ENCODE measurements at regions of chrX and their contacts with region 1.

Region 1: GRCh38 chrX:16826207-16826606 is 39.9 kb downstream of the TXLNG start:
- DNase-seq: peak in 4 of 14 experiments; percentile 8 to 43 (median 36)
- ATAC-seq: peak; percentile 44
- H3K4me3 ChIP-seq: no peak overlapping the region
- H3K4me3 Mint-ChIP-seq: no peak overlapping the region
- H3K27ac ChIP-seq: no peak overlapping the region
- H3K27ac Mint-ChIP-seq: no peak overlapping the region
- H3K4me1 ChIP-seq: no peaks in the 10 kb centered on the region
- H3K4me1 Mint-ChIP-seq: no peaks in the 10 kb centered on the region
- H3K27me3 ChIP-seq: no peaks in the 10 kb centered on the region
- H3K27me3 Mint-ChIP-seq: no peaks in the 10 kb centered on the region
- CTCF ChIP-seq: no peak

Region 2: GRCh38 chrX:16778545-16778944 is 47.7 kb before region 1 on chrX:
- CTCF ChIA-PET with region 1: no interaction called
- POLR2A ChIA-PET with region 1: no interaction called
- intact Hi-C with region 1: no loop called
- DNase-seq: no peak
- ATAC-seq: no peak
- H3K4me3 ChIP-seq: no peak overlapping the region
- H3K4me3 Mint-ChIP-seq: no peak overlapping the region
- H3K27ac ChIP-seq: no peak overlapping the region
- H3K27ac Mint-ChIP-seq: no peak overlapping the region
- H3K4me1 ChIP-seq: no peaks in the 10 kb centered on the region
- H3K4me1 Mint-ChIP-seq: no peaks in the 10 kb centered on the region
- H3K27me3 ChIP-seq: no peaks in the 10 kb centered on the region
- H3K27me3 Mint-ChIP-seq: no peaks in the 10 kb centered on the region
- CTCF ChIP-seq: no peak

Region 3: GRCh38 chrX:16845686-16846085 is 19.5 kb after region 1 on chrX:
- CTCF ChIA-PET with region 1: no interaction called
- POLR2A ChIA-PET with region 1: no interaction called
- intact Hi-C with region 1: loop called in 1 of 2 experiments (anchors 2 kb)
- DNase-seq: no peak
- ATAC-seq: no peak
- H3K4me3 ChIP-seq: no peak overlapping the region
- H3K4me3 Mint-ChIP-seq: no peak overlapping the region
- H3K27ac ChIP-seq: no peak overlapping the region
- H3K27ac Mint-ChIP-seq: no peak overlapping the region
- H3K4me1 ChIP-seq: no peaks in the 10 kb centered on the region
- H3K4me1 Mint-ChIP-seq: peaks cover 5% of the 10 kb centered on the region
- H3K27me3 ChIP-seq: no peaks in the 10 kb centered on the region
- H3K27me3 Mint-ChIP-seq: no peaks in the 10 kb centered on the region
- CTCF ChIP-seq: no peak

Region 4: GRCh38 chrX:16882702-16883486 is 56.7 kb after region 1 on chrX:
- CTCF ChIA-PET with region 1: interaction called, 10 read pairs
- POLR2A ChIA-PET with region 1: interaction called, 4 read pairs
- intact Hi-C with region 1: no loop called
- DNase-seq: peak; percentile 38 to 79 (median 62)
- ATAC-seq: peak; percentile 84
- H3K4me3 ChIP-seq: peak overlapping the region; percentile 63
- H3K4me3 Mint-ChIP-seq: peak overlapping the region; percentile 87
- H3K27ac ChIP-seq: peak overlapping the region in 1 of 2 donors; percentile 50
- H3K27ac Mint-ChIP-seq: peak overlapping the region; percentile 81
- H3K4me1 ChIP-seq: peaks cover 12% of the 10 kb centered on the region
- H3K4me1 Mint-ChIP-seq: peaks cover 4% of the 10 kb centered on the region
- H3K27me3 ChIP-seq: peaks cover 0 to 4% of the 10 kb centered on the region in 2 experiments
- H3K27me3 Mint-ChIP-seq: no peaks in the 10 kb centered on the region
- CTCF ChIP-seq: peak; percentile 70

Region 5: DNA sequence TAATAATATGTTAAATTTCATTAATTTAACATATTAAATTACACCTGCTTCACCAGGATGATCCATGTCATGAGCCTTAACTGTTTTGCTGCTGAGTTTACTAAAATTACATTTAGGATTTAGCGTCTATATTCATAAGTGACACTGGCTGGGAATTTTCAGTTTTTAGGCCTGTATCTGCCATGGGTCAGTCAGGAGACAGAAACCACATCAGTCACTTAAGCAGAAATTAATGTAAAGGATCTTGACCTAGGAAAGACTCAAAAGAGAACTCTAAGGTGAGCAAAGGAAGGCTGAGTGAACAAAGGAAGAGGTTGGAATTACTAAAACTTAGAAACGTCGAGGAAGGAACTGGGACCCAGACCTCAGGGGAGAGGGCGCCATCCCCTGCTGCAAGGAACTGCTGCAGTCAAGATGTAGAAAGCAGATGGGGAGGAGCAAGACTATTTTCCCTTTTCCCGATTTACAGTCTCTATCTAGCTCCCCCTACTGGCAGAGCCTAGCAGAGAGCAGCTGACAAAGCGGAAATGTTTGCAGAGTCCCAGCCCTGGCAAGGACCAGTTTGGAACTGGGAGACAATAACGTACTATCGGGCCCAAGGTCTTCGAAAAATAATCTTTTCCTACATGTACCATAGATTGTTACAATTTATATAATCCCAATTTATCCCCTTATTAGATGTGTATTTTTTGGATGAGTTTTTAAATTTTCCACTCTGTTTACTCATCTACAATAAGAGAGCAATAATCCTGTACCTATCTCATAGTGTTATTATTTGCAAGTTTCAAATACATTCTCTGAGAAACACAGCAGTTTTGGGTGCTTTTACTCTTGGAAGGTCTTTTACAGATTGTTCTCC is 66.5 kb after region 1 on chrX:
- CTCF ChIA-PET with region 1: interaction called, 4 read pairs
- POLR2A ChIA-PET with region 1: no interaction called
- intact Hi-C with region 1: loop called in 1 of 2 experiments (anchors 2 kb)
- DNase-seq: peak in 13 of 14 experiments; percentile 17 to 79 (median 36)
- ATAC-seq: peak; percentile 48
- H3K4me3 ChIP-seq: no peak overlapping the region
- H3K4me3 Mint-ChIP-seq: no peak overlapping the region
- H3K27ac ChIP-seq: no peak overlapping the region
- H3K27ac Mint-ChIP-seq: no peak overlapping the region
- H3K4me1 ChIP-seq: peaks cover 10% of the 10 kb centered on the region
- H3K4me1 Mint-ChIP-seq: peaks cover 14% of the 10 kb centered on the region
- H3K27me3 ChIP-seq: no peaks in the 10 kb centered on the region
- H3K27me3 Mint-ChIP-seq: no peaks in the 10 kb centered on the region
- CTCF ChIP-seq: peak; percentile 73

Region 6: GRCh38 chrX:17007206-17007683 is 181.0 kb after region 1 on chrX:
- CTCF ChIA-PET with region 1: no interaction called
- POLR2A ChIA-PET with region 1: no interaction called
- intact Hi-C with region 1: no loop called
- DNase-seq: peak in 1 of 14 experiments; percentile 4
- ATAC-seq: no peak
- H3K4me3 ChIP-seq: no peak overlapping the region
- H3K4me3 Mint-ChIP-seq: no peak overlapping the region
- H3K27ac ChIP-seq: no peak overlapping the region
- H3K27ac Mint-ChIP-seq: no peak overlapping the region
- H3K4me1 ChIP-seq: no peaks in the 10 kb centered on the region
- H3K4me1 Mint-ChIP-seq: peaks cover 10% of the 10 kb centered on the region
- H3K27me3 ChIP-seq: no peaks in the 10 kb centered on the region
- H3K27me3 Mint-ChIP-seq: peaks cover 4% of the 10 kb centered on the region
- CTCF ChIP-seq: no peak

Region 7: GRCh38 chrX:17046478-17047097 is 220.4 kb after region 1 on chrX:
- CTCF ChIA-PET with region 1: interaction called, 5 read pairs
- POLR2A ChIA-PET with region 1: no interaction called
- intact Hi-C with region 1: loop called (anchors 1 to 5 kb)
- DNase-seq: peak in 13 of 14 experiments; percentile 1 to 57 (median 11)
- ATAC-seq: peak; percentile 37
- H3K4me3 ChIP-seq: no peak overlapping the region
- H3K4me3 Mint-ChIP-seq: no peak overlapping the region
- H3K27ac ChIP-seq: no peak overlapping the region
- H3K27ac Mint-ChIP-seq: no peak overlapping the region
- H3K4me1 ChIP-seq: no peaks in the 10 kb centered on the region
- H3K4me1 Mint-ChIP-seq: no peaks in the 10 kb centered on the region
- H3K27me3 ChIP-seq: no peaks in the 10 kb centered on the region
- H3K27me3 Mint-ChIP-seq: no peaks in the 10 kb centered on the region
- CTCF ChIP-seq: peak; percentile 48

Measured in CD4-positive, alpha-beta T cell (primary cell).